ENCODE measurements at regions of chr20 and their contacts with region 1.

Region 1: GRCh38 chr20:23606652-23607049 is 934 bp upstream of the CST9 start:
- DNase-seq: peak; percentile 54
- ATAC-seq: peak; percentile 99
- H3K4me3 ChIP-seq: no peak overlapping the region
- H3K27ac ChIP-seq: no peak overlapping the region
- H3K4me1 ChIP-seq: no peaks in the 10 kb centered on the region
- H3K27me3 ChIP-seq: peaks cover 4% of the 10 kb centered on the region; the same call in 1 of the 2 replicates
- CTCF ChIP-seq: peak; percentile 62 to 88 (median 88)
- POLR2A ChIP-seq: no peak
- RAD21 ChIP-seq: peak; percentile 83

Region 2: GRCh38 chr20:23350196-23350903 is 256.3 kb before region 1 on chr20 and contains the start of gene NXT1:
- CTCF ChIA-PET with region 1: no interaction called
- POLR2A ChIA-PET with region 1: no interaction called
- RAD21 ChIA-PET with region 1: no interaction called
- intact Hi-C with region 1: loop called (anchors 2 kb)
- DNase-seq: peak; percentile 98
- ATAC-seq: peak; percentile 88
- H3K4me3 ChIP-seq: peak within 1 kb of the TSS; percentile 92 to 99
- H3K27ac ChIP-seq: peak within 1 kb of the TSS; percentile 99
- H3K4me1 ChIP-seq: peaks cover 15 to 24% of the 10 kb centered on the region in 2 experiments
- H3K27me3 ChIP-seq: no peaks in the 10 kb centered on the region
- CTCF ChIP-seq: no peak
- POLR2A ChIP-seq: peak; percentile 46
- RAD21 ChIP-seq: no peak
- total RNA-seq, gene NXT1: 29.9 TPM

Region 3: DNA sequence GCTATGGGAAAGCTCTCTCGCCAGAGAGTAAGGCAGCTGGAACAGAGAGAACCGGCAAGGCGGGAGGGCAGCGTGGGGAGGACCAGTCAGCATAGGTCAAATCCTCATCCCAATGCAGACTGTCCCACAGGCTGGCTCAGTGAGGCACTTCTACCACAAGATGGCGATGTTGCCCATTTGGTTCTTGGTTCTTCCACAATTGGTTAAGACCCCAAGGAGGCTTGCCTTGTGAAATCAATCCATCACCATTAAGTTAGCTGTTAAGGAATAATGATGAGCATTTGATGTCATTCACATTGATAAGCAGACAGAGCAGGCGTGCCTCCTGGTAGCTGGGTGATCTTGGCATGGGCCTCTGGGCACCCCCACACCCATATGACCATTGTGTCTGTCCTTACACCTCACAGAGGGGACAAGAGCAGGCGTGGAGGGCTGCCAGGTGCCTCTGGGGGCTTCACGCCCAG is 164.8 kb before region 1 on chr20:
- CTCF ChIA-PET with region 1: interaction called, 12 read pairs
- POLR2A ChIA-PET with region 1: no interaction called
- RAD21 ChIA-PET with region 1: no interaction called
- intact Hi-C with region 1: loop called (anchors 2 kb)
- DNase-seq: peak; percentile 69
- ATAC-seq: peak; percentile 92
- H3K4me3 ChIP-seq: no peak overlapping the region
- H3K27ac ChIP-seq: no peak overlapping the region
- H3K4me1 ChIP-seq: peaks cover 0 to 7% of the 10 kb centered on the region in 2 experiments; a peak in 1 of 4 replicates
- H3K27me3 ChIP-seq: no peaks in the 10 kb centered on the region; the same call in 1 of the 2 replicates
- CTCF ChIP-seq: peak; percentile 61 to 93 (median 91); a peak in 5 of 6 replicates
- POLR2A ChIP-seq: no peak
- RAD21 ChIP-seq: peak; percentile 74

Region 4: DNA sequence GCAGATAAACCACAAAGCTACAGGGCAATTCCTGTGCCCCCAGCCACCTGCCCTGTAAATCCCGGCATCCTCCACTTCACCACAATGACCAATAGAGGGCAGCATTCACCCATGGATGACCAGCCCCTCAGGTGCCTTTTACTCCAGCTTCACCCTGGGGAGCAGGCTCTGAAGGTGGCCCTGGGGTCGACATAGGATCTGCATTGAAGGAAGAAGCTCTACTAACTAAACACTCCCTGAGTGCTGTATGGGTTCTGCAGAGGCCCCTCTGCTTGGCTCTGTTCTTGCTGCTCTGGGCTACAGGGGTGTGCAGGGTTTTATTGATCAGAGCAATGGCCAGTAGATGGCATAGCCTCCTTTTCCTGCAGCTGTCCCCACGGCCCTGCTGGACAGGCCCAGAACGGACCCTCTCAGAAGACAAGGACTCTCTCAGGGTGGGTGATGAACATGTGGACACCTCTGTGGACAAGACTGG is 61.9 kb after region 1 on chr20:
- CTCF ChIA-PET with region 1: no interaction called
- POLR2A ChIA-PET with region 1: no interaction called
- RAD21 ChIA-PET with region 1: no interaction called
- intact Hi-C with region 1: loop called (anchors 5 kb)
- DNase-seq: peak; percentile 54
- ATAC-seq: peak; percentile 95
- H3K4me3 ChIP-seq: no peak overlapping the region
- H3K27ac ChIP-seq: no peak overlapping the region
- H3K4me1 ChIP-seq: no peaks in the 10 kb centered on the region
- H3K27me3 ChIP-seq: peaks cover 2% of the 10 kb centered on the region; the same call in 1 of the 2 replicates
- CTCF ChIP-seq: peak; percentile 81 to 92 (median 89)
- POLR2A ChIP-seq: no peak
- RAD21 ChIP-seq: peak; percentile 77